ENCODE measurements at regions of chr9 and their contacts with region 1.

Region 1: DNA sequence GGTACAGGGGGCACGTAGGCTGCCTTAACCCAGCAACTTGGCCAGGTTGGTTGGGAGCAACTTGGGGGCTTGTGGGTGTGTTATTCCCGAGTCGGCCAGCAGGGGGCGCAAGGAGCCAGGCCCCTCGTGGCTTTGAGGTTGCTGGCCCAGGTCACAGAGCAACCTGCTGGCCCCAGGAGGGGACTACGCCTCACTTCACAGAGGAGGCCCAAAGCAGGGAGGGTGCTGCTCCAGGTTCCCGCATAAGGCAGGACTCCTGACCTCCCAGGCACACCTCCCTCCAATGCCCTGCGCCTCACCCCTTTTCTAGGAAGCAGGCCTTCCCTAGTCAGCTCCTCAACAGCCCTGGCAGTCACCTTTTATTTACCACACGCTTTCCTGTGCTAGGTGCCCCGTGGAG is 18.1 kb downstream of the KYAT1 start:
- DNase-seq: peak; percentile 69 to 89 (median 79)
- ATAC-seq: peak; percentile 99
- H3K4me3 ChIP-seq: no peak overlapping the region
- H3K4me3 Mint-ChIP-seq: no peak overlapping the region
- H3K27ac ChIP-seq: no peak overlapping the region
- H3K27ac Mint-ChIP-seq: peak overlapping the region; percentile 11 to 78 (median 55)
- H3K4me1 ChIP-seq: peaks cover 3 to 7% of the 10 kb centered on the region in 2 donors
- H3K4me1 Mint-ChIP-seq: peaks cover 0 to 10% (median 6%) of the 10 kb centered on the region in 7 donors
- H3K27me3 ChIP-seq: no peaks in the 10 kb centered on the region
- H3K27me3 Mint-ChIP-seq: no peaks in the 10 kb centered on the region

Region 2: GRCh38 chr9:128643519-128644300 is 219.9 kb before region 1 on chr9:
- CTCF ChIA-PET with region 1: no interaction called
- POLR2A ChIA-PET with region 1: no interaction called
- intact Hi-C with region 1: loop called in 1 of 2 experiments (anchors 2 kb)
- DNase-seq: no peak
- ATAC-seq: no peak
- H3K4me3 ChIP-seq: no peak overlapping the region
- H3K4me3 Mint-ChIP-seq: no peak overlapping the region
- H3K27ac ChIP-seq: no peak overlapping the region
- H3K27ac Mint-ChIP-seq: peak overlapping the region in 1 of 9 donors; percentile 60
- H3K4me1 ChIP-seq: no peaks in the 10 kb centered on the region
- H3K4me1 Mint-ChIP-seq: peaks cover 0 to 3% (median 0%) of the 10 kb centered on the region in 7 donors
- H3K27me3 ChIP-seq: no peaks in the 10 kb centered on the region
- H3K27me3 Mint-ChIP-seq: no peaks in the 10 kb centered on the region

Region 3: GRCh38 chr9:128908372-128908771 is 44.7 kb after region 1 on chr9:
- CTCF ChIA-PET with region 1: interaction called, 12 read pairs
- POLR2A ChIA-PET with region 1: no interaction called
- intact Hi-C with region 1: no loop called
- DNase-seq: no peak
- ATAC-seq: no peak
- H3K4me3 ChIP-seq: no peak overlapping the region
- H3K4me3 Mint-ChIP-seq: no peak overlapping the region
- H3K27ac ChIP-seq: no peak overlapping the region
- H3K27ac Mint-ChIP-seq: peak overlapping the region in 4 of 9 donors; percentile 12 to 49 (median 30)
- H3K4me1 ChIP-seq: peaks cover 12 to 36% of the 10 kb centered on the region in 2 donors
- H3K4me1 Mint-ChIP-seq: peaks cover 32 to 77% (median 64%) of the 10 kb centered on the region in 7 donors
- H3K27me3 ChIP-seq: no peaks in the 10 kb centered on the region
- H3K27me3 Mint-ChIP-seq: no peaks in the 10 kb centered on the region

Region 4: DNA sequence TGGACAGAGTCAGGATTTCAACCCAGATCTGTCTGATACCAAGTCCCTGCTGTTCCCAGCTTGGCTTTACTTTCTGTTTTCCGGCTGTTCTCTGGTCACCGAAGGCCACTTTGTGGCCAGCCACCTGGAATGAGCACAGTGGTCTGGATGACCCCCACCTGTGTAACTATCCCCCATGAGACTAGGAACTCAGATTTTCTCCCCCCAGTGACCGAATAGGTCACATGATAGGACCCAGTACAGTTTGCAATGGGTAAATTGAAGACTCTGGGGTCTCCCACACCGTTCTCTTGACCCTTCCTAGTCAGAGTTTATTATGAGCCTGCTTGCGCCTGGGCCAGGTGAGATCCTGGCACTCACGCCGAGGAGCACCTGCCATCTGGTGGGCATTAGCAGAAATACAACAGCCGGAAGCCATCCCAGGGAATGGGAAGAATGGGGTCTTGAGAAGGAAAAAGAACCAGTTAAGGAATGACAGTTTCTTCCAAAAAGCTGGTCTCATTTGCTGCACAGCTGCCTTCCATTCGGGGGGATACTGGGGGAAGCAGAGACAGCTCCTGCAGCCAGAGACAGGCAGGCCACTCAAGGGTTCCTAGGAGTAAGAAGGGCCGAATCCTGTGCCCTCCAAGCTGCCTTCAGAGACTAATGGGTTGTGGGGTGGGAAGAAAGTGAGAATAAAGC is 64.2 kb after region 1 on chr9:
- CTCF ChIA-PET with region 1: interaction called, 113 read pairs
- POLR2A ChIA-PET with region 1: interaction called, 17 read pairs
- intact Hi-C with region 1: loop called (anchors 1 kb)
- DNase-seq: peak; percentile 24 to 69 (median 46)
- ATAC-seq: peak; percentile 77
- H3K4me3 ChIP-seq: no peak overlapping the region
- H3K4me3 Mint-ChIP-seq: peak overlapping the region in 3 of 10 donors; percentile 11 to 47 (median 39)
- H3K27ac ChIP-seq: no peak overlapping the region
- H3K27ac Mint-ChIP-seq: peak overlapping the region in 8 of 9 donors; percentile 1 to 76 (median 50)
- H3K4me1 ChIP-seq: peaks cover 3 to 6% of the 10 kb centered on the region in 2 donors
- H3K4me1 Mint-ChIP-seq: peaks cover 12 to 22% (median 19%) of the 10 kb centered on the region in 7 donors
- H3K27me3 ChIP-seq: no peaks in the 10 kb centered on the region
- H3K27me3 Mint-ChIP-seq: peaks cover 0 to 3% (median 0%) of the 10 kb centered on the region in 5 donors